Dorsolateral prefrontal cortex (tissue), 120 donors: ENCODE measurements at regions of chr3 and their contacts with region 1.

Region 1: DNA sequence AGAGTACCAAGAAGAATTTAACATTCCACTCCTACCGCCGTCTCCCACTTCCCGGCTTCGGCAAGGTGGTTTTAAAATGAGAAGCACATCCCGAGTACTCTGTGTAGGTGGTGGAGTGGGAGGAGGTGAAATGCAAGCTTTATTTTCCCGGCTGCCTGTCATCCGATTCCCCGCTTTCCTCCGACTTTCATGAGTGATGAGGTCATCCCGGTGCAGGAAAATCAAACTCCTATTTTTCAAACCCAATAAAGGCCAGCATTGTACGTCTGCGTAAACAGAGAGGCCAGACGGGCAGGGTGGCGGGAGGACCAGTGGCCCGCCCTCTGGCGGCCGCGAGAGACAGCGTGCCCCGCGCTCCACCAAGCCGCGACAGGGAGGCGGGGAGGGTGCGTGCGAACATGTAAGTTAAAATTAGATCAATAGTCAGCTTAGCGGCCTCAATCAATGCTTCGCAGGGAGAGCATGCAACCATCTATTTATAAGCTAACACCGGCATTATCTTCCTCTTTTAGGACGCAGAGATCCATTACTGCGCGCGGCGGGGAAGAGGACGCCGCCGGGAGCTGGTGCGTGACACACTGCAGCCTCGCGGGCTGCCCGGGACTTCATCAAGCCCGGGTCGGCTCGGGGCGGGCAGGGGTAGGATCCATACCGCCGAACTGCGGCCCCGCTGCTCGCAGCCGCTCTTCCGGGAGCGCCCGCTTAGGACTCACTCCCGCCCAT is 163.3 kb downstream of the CD47 start:
- DNase-seq: peak; percentile 76 to 90 (median 85)
- H3K4me3 ChIP-seq: peak overlapping the region; percentile 45 to 89 (median 72)
- H3K27ac ChIP-seq: peak overlapping the region; percentile 46 to 98 (median 94)
- H3K27me3 ChIP-seq: no peaks in the 10 kb centered on the region
- CTCF ChIP-seq: peak; percentile 69 to 98 (median 92)

Region 2: DNA sequence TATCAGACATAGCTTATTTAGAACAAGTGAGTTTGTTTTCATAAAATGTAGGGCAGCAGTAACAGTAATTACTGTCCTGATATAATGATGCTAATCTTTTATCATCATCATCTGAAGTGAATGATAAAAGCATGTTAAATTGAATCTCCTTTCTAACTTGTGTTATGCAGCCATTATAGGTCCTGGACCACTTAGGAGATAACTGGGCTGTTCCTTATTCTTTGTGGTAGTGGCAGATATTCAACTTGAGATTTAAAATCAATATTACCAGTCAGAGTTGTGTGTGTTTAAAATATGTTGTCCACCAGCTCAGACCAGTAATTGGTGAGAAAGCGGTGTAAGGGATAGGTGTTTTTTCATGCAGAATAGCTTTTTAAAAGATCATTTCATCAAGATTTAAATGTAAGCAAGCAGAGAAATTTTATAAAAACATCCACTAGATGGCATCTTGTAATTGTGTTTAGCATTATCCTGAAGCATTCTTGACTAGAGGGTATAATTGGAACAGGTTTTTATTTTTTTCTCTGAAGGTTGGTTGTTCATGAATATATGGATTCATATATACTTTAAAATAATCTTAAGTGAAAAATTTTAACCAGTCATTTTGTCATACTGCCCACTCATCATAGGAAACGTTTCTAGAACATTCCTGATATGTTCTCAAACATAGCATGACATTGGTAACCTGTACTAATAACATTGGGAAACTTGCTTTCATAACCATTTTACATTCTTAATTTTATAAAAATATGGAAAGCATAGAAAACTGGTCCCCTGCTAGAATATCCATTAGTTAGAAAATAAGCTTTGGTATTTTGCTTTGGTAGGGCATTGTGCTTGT is 250.8 kb before region 1 on chr3:
- intact Hi-C with region 1: loop called in 1 of 2 experiments (anchors 10 kb)
- DNase-seq: no peak
- H3K4me3 ChIP-seq: no peak overlapping the region
- H3K27ac ChIP-seq: peak overlapping the region in 9 of 59 donors; percentile 1 to 75 (median 55)
- H3K27me3 ChIP-seq: no peaks in the 10 kb centered on the region
- CTCF ChIP-seq: peak; percentile 44 to 90 (median 74)

Region 3: DNA sequence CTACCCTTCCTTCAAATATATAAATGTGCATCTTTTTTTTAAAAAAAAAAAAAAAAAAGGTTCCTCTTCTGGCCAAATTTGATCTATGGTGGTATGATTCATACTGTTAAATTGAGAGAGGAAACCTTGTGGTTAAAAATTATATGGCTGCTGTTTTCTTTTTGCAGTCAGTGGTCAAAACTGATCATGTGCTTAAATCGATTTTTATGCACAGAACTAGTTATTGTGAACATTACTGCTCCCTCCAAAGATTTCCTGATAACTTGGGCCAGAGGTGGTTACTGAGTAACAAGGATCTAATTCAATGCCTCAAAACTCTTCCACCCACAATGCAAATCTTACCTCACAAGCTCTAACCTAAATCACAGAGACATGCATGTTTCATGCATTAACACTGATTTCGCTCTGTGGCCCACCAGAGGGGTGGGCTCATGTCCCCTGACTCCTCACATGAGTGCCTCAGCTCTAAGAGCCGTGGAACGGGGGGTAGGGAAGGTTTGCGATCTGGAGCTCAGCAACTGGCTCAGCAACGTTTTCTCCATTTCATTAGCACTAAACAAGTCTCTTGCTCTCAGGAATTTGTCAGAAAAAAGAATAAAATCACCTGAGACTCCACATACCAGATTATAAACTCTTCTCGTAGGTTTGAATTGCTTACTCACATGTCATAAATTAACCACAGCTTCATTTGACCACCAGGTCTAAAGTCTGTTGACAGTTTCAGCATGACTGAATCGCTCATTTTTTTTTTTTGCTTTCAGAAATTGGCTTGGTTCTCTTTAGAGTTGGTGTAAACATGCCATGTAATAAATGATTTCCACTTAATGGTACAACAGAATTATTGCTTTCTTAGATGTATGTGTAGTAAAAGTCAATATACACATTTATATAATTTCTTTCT is 117.1 kb before region 1 on chr3:
- intact Hi-C with region 1: loop called (anchors 5 to 10 kb)
- DNase-seq: no peak
- H3K4me3 ChIP-seq: no peak overlapping the region
- H3K27ac ChIP-seq: peak overlapping the region in 2 of 59 donors; percentile 11 to 43
- H3K27me3 ChIP-seq: no peaks in the 10 kb centered on the region
- CTCF ChIP-seq: no peak

Region 4: GRCh38 chr3:108090701-108091451 is 163.4 kb after region 1 on chr3 and contains the start of gene CD47:
- intact Hi-C with region 1: loop called (anchors 2 to 5 kb)
- DNase-seq: peak; percentile 85 to 97 (median 92)
- H3K4me3 ChIP-seq: peak within 1 kb of the TSS; percentile 72 to 99 (median 91)
- H3K27ac ChIP-seq: peak within 1 kb of the TSS; percentile 72 to 98 (median 93)
- H3K27me3 ChIP-seq: no peaks in the 10 kb centered on the region
- CTCF ChIP-seq: peak in 18 of 56 donors; percentile 0 to 46 (median 17)
- total RNA-seq, gene CD47: 66.8 to 236 (median 180) TPM

Region 5: GRCh38 chr3:108271626-108272025 is 344.1 kb after region 1 on chr3:
- intact Hi-C with region 1: no loop called
- DNase-seq: no peak
- H3K4me3 ChIP-seq: no peak overlapping the region
- H3K27ac ChIP-seq: no peak overlapping the region
- H3K27me3 ChIP-seq: no peaks in the 10 kb centered on the region
- CTCF ChIP-seq: no peak

Region 6: GRCh38 chr3:108406661-108407206 is 479.2 kb after region 1 on chr3:
- intact Hi-C with region 1: loop called in 1 of 2 experiments (anchors 5 kb)
- DNase-seq: peak in 2 of 10 donors; percentile 16 to 71
- H3K4me3 ChIP-seq: peak overlapping the region in 2 of 59 donors; percentile 3 to 16
- H3K27ac ChIP-seq: peak overlapping the region in 35 of 59 donors; percentile 2 to 81 (median 52)
- H3K27me3 ChIP-seq: no peaks in the 10 kb centered on the region
- CTCF ChIP-seq: peak in 52 of 56 donors; percentile 18 to 90 (median 77)

Region 7: GRCh38 chr3:108477511-108478147 is 550.1 kb after region 1 on chr3:
- intact Hi-C with region 1: loop called (anchors 5 kb)
- DNase-seq: peak in 5 of 10 donors; percentile 17 to 50 (median 35)
- H3K4me3 ChIP-seq: peak overlapping the region in 23 of 59 donors; percentile 4 to 49 (median 20)
- H3K27ac ChIP-seq: no peak overlapping the region
- H3K27me3 ChIP-seq: no peaks in the 10 kb centered on the region
- CTCF ChIP-seq: peak; percentile 49 to 89 (median 76)